GM12878 (cell line): ENCODE measurements at regions of chr1 and their contacts with region 1.

Region 1: GRCh38 chr1:56291374-56291919 is 287.9 kb downstream of the PLPP3 start:
- DNase-seq: no peak
- ATAC-seq: no peak
- H3K4me3 ChIP-seq: no peak overlapping the region
- H3K27ac ChIP-seq: no peak overlapping the region
- H3K4me1 ChIP-seq: no peaks in the 10 kb centered on the region
- H3K27me3 ChIP-seq: no peaks in the 10 kb centered on the region
- CTCF ChIP-seq: no peak
- EP300 ChIP-seq: no peak
- POLR2A ChIP-seq: no peak
- RAD21 ChIP-seq: no peak

Region 2: DNA sequence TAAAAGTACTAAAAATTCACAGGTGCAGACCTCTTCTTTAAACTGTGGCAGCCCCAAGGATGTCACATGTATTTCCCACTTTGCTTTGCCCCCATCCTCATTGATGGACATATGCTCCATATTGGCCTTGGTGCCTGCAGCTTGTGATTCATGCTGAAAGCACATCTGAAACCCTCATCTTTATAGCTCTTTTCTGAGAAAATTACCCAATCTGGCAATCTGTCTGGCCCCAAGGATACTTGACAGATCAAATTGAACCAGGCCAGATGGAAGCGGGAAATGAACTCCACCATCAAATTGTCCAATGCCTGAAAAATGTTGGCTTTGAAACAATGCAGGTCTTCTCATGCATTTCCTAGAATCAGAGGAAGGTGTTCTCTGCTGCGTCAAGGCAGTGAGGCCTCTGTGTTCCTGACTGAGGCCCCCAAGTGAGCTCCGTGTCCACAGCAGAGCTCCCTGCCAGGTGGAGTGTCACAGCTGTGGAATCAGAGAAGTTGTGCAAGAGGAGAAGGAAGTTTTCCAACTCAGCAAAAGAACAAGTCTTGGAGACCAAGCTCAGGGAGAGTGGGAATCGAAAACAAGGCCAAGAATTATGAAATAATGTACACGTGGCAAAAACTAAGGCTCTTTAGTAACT is 35.8 kb before region 1 on chr1:
- CTCF ChIA-PET with region 1: interaction called, 3 read pairs
- POLR2A ChIA-PET with region 1: no interaction called
- RAD21 ChIA-PET with region 1: no interaction called
- SMC1A ChIA-PET with region 1: interaction called, 11 read pairs
- in situ Hi-C with region 1: no loop called
- intact Hi-C with region 1: no loop called
- DNase-seq: no peak
- ATAC-seq: no peak; the same call in 2 of the 3 replicates
- H3K4me3 ChIP-seq: no peak overlapping the region
- H3K27ac ChIP-seq: no peak overlapping the region
- H3K4me1 ChIP-seq: no peaks in the 10 kb centered on the region
- H3K27me3 ChIP-seq: no peaks in the 10 kb centered on the region
- CTCF ChIP-seq: no peak
- EP300 ChIP-seq: no peak
- POLR2A ChIP-seq: no peak
- RAD21 ChIP-seq: no peak

Region 3: GRCh38 chr1:56278061-56278460 is 13.4 kb before region 1 on chr1:
- CTCF ChIA-PET with region 1: interaction called, 3 read pairs
- POLR2A ChIA-PET with region 1: interaction called, 9 read pairs
- RAD21 ChIA-PET with region 1: interaction called, 15 read pairs
- SMC1A ChIA-PET with region 1: interaction called, 22 read pairs
- in situ Hi-C with region 1: no loop called
- intact Hi-C with region 1: no loop called
- DNase-seq: no peak
- ATAC-seq: peak; percentile 62
- H3K4me3 ChIP-seq: no peak overlapping the region
- H3K27ac ChIP-seq: no peak overlapping the region
- H3K4me1 ChIP-seq: no peaks in the 10 kb centered on the region
- H3K27me3 ChIP-seq: no peaks in the 10 kb centered on the region
- CTCF ChIP-seq: no peak
- EP300 ChIP-seq: peak in 1 of 2 experiments; percentile 62; a peak in 1 of 4 replicates
- POLR2A ChIP-seq: no peak
- RAD21 ChIP-seq: no peak

Region 4: GRCh38 chr1:56322211-56322610 is 30.8 kb after region 1 on chr1:
- CTCF ChIA-PET with region 1: interaction called, 3 read pairs
- POLR2A ChIA-PET with region 1: no interaction called
- RAD21 ChIA-PET with region 1: interaction called, 4 read pairs
- SMC1A ChIA-PET with region 1: interaction called, 22 read pairs
- in situ Hi-C with region 1: no loop called
- intact Hi-C with region 1: no loop called
- DNase-seq: no peak
- ATAC-seq: no peak
- H3K4me3 ChIP-seq: no peak overlapping the region
- H3K27ac ChIP-seq: no peak overlapping the region
- H3K4me1 ChIP-seq: no peaks in the 10 kb centered on the region
- H3K27me3 ChIP-seq: no peaks in the 10 kb centered on the region
- CTCF ChIP-seq: no peak
- EP300 ChIP-seq: no peak
- POLR2A ChIP-seq: no peak
- RAD21 ChIP-seq: no peak

Region 5: GRCh38 chr1:56339786-56340465 is 48.5 kb after region 1 on chr1:
- CTCF ChIA-PET with region 1: interaction called, 3 read pairs
- POLR2A ChIA-PET with region 1: no interaction called
- RAD21 ChIA-PET with region 1: interaction called, 17 read pairs
- SMC1A ChIA-PET with region 1: interaction called, 24 read pairs
- in situ Hi-C with region 1: no loop called
- intact Hi-C with region 1: no loop called
- DNase-seq: no peak
- ATAC-seq: peak; percentile 76
- H3K4me3 ChIP-seq: no peak overlapping the region
- H3K27ac ChIP-seq: no peak overlapping the region
- H3K4me1 ChIP-seq: no peaks in the 10 kb centered on the region
- H3K27me3 ChIP-seq: no peaks in the 10 kb centered on the region
- CTCF ChIP-seq: no peak
- EP300 ChIP-seq: no peak
- POLR2A ChIP-seq: no peak
- RAD21 ChIP-seq: no peak